Cardiac septum (tissue), 1 donor: ENCODE measurements at regions of chr10 and their contacts with region 1.

Region 1: DNA sequence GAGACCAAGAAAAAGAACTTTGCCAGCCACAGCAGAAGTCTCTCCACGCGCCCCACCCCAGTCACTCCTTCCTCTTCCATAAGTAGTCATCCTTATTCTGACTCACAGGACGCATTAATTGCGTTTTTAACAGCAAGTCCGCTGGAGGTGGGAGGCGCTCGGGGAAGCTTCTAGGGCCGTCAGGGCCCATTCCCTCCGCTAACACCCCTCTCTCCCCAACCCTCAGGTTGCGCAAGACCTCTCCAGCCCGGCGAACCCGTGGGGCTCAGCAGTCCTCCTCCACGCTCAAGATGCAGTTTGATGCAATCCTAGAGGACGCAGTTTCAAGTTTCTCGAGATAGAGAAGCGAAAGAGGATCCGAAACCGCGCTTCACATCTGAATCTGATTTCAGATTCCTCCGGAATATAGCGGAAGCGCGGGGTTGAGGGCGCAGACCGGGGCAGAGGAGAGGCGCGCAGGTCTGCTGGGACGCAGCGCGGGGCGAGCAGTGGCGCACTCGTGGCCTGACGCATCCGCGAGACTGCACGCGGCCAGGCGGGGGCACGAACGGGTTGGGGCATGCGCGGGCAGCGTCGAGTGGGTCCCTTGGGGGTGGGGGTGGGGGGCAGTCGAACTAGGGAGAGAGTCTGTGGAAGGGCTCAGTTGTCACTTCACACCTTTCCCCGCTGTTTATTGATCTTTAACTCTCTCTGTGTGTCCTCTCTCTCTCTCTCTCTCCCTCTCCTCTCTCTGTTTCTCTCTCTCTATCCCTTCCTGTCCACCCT is 37.8 kb upstream of the PSAP start:
- DNase-seq: peak; percentile 88

Region 2: GRCh38 chr10:71713135-71714030 is 175.4 kb before region 1 on chr10:
- intact Hi-C with region 1: loop called (anchors 10 kb)
- DNase-seq: peak; percentile 90

Region 3: GRCh38 chr10:71835671-71836595 is 52.9 kb before region 1 on chr10:
- intact Hi-C with region 1: loop called (anchors 5 kb)
- DNase-seq: no peak

Region 4: GRCh38 chr10:72297968-72298773 is 409.4 kb after region 1 on chr10:
- intact Hi-C with region 1: no loop called
- DNase-seq: peak; percentile 98